A549 (cell line): ENCODE measurements at regions of chr10 and their contacts with region 1.

Region 1: GRCh38 chr10:14093730-14094484 is 236.8 kb downstream of the FRMD4A start:
- DNase-seq: peak; percentile 5 to 17
- ATAC-seq: peak in 1 of 2 experiments; percentile 47; a peak in 2 of 6 replicates
- H3K4me3 ChIP-seq: no peak overlapping the region
- H3K27ac ChIP-seq: no peak overlapping the region
- H3K4me1 ChIP-seq: no peaks in the 10 kb centered on the region
- CTCF ChIP-seq: peak; percentile 43; the same call in 2 of the 3 replicates
- EP300 ChIP-seq: no peak
- POLR2A ChIP-seq: no peak
- RAD21 ChIP-seq: peak; percentile 51 to 62

Region 2: DNA sequence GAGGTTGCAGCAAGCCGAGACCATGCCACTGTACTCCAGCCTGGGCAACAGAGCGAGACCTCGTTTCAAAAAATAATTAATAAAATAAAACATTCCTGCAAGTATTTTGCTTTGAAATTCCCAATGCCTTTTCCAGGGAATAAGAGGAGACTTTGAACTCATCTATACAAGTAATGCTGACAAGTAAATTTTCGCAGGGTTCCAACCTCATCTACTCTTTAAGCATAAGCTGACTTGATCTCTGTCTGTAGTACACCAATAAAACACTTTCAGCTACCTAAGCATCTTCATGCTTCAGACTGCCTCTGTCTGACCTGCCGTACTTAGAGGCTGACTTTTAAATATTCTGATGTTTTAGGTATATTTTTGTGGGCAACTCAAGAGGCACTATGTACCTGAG is 551.4 kb before region 1 on chr10:
- CTCF ChIA-PET with region 1: no interaction called
- POLR2A ChIA-PET with region 1: no interaction called
- DNase-seq: no peak
- ATAC-seq: no peak
- H3K4me3 ChIP-seq: no peak overlapping the region
- H3K27ac ChIP-seq: no peak overlapping the region
- H3K4me1 ChIP-seq: no peaks in the 10 kb centered on the region
- CTCF ChIP-seq: no peak
- EP300 ChIP-seq: no peak
- POLR2A ChIP-seq: no peak
- RAD21 ChIP-seq: no peak

Region 3: GRCh38 chr10:13787015-13787421 is 306.9 kb before region 1 on chr10:
- CTCF ChIA-PET with region 1: interaction called, 30 read pairs
- POLR2A ChIA-PET with region 1: no interaction called
- DNase-seq: peak in 1 of 2 experiments; percentile 13
- ATAC-seq: peak in 1 of 2 experiments; percentile 33; a peak in 2 of 6 replicates
- H3K4me3 ChIP-seq: no peak overlapping the region
- H3K27ac ChIP-seq: no peak overlapping the region
- H3K4me1 ChIP-seq: no peaks in the 10 kb centered on the region
- CTCF ChIP-seq: no peak
- EP300 ChIP-seq: no peak
- POLR2A ChIP-seq: no peak
- RAD21 ChIP-seq: no peak